ENCODE measurements at regions of chr3 and their contacts with region 1.

Region 1: DNA sequence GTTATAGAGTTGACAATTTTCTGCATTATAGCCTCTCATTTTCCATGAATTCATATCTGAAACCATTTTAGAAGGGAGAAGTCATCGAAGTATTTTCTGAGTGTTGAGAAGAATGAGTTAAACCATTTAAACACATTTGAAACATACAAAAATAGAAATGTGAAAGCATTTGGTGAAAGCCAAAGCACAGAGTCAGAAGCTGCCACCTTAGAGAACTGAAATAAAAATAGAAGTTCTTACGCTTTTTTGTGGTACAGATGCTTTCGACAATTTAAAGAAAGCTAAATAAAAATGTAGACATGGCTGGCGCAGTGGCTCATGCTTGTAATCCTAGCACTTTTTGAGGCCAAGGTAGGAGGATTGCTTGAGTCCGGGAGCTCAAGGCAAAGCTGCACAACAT is 9.0 kb downstream of the FANCD2OS start:
- DNase-seq: no peak
- H3K4me3 ChIP-seq: no peak overlapping the region
- H3K4me3 Mint-ChIP-seq: no peak overlapping the region
- H3K27ac Mint-ChIP-seq: no peak overlapping the region
- H3K4me1 ChIP-seq: no peaks in the 10 kb centered on the region
- H3K4me1 Mint-ChIP-seq: no peaks in the 10 kb centered on the region
- H3K27me3 ChIP-seq: no peaks in the 10 kb centered on the region
- H3K27me3 Mint-ChIP-seq: no peaks in the 10 kb centered on the region
- CTCF ChIP-seq: no peak

Region 2: DNA sequence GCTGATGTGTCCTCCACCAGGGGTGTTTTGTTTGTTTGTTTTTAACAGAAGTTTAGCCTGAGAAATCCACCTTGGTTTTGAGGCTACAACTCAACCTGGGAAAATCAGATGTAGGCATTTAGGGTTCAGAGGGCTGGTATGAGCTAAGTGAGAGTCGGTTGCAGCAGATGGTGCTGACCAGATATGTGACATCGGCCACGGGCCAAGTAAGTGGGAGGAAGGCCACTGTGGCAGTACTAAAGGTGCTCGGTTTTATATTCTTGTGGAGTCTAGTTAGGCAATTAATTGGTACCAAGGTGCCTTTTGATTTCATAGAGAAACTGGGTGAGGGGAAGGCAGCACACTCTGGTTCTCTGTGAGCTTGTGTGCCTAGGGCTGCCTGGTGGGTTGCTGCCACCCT is 439.2 kb before region 1 on chr3:
- CTCF ChIA-PET with region 1: no interaction called
- POLR2A ChIA-PET with region 1: interaction called, 11 read pairs
- intact Hi-C with region 1: no loop called
- DNase-seq: no peak
- H3K4me3 ChIP-seq: no peak overlapping the region
- H3K4me3 Mint-ChIP-seq: no peak overlapping the region
- H3K27ac Mint-ChIP-seq: no peak overlapping the region
- H3K4me1 ChIP-seq: no peaks in the 10 kb centered on the region
- H3K4me1 Mint-ChIP-seq: no peaks in the 10 kb centered on the region
- H3K27me3 ChIP-seq: no peaks in the 10 kb centered on the region
- H3K27me3 Mint-ChIP-seq: no peaks in the 10 kb centered on the region
- CTCF ChIP-seq: no peak